Dendritic cell treated with granulocyte-macrophage colony-stimulating factor and Interleukin-4, amounts not matched to agents 40 ng/mL and 50 ng/mL, for 4 days (primary cell): ENCODE measurements at regions of chr10 and their contacts with region 1.

Region 1: GRCh38 chr10:70283445-70284399 is at the start of gene NPFFR1:
- H3K4me3 Mint-ChIP-seq: peak within 1 kb of the TSS; percentile 47
- H3K27ac Mint-ChIP-seq: peak within 1 kb of the TSS; percentile 59
- H3K4me1 Mint-ChIP-seq: peaks cover 53% of the 10 kb centered on the region
- H3K27me3 Mint-ChIP-seq: peaks cover 62% of the 10 kb centered on the region

Region 2: DNA sequence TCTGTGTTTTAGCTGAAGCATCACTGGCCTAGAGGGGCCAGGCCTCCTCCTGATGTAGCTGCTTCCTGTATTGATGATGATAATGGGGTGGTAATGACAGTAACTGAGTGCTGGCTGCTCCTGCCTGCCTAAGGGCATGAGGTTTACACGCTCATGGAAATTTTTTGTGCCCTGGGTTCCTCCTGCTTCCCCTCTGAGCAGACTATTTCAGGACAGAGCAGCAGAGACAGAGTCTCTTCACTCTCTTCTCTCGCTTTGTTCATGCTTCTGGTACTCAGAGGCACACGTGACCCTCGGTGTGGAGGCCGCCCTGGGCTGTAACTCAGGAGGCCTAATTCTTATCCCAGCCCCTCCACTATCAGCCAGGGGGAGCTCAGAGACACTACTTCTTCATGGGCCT is 70.8 kb after region 1 on chr10:
- intact Hi-C with region 1: loop called (anchors 5 kb)
- H3K4me3 Mint-ChIP-seq: no peak overlapping the region
- H3K27ac Mint-ChIP-seq: peak overlapping the region; percentile 71
- H3K4me1 Mint-ChIP-seq: peaks cover 66% of the 10 kb centered on the region
- H3K27me3 Mint-ChIP-seq: peaks cover 56% of the 10 kb centered on the region